ENCODE measurements at regions of chr3 and their contacts with region 1.

Region 1: GRCh38 chr3:155701882-155702465 is 42.9 kb downstream of the PLCH1 start:
- DNase-seq: no peak
- ATAC-seq: peak; percentile 62 to 66
- H3K4me3 ChIP-seq: no peak overlapping the region
- H3K27ac ChIP-seq: no peak overlapping the region
- H3K4me1 ChIP-seq: no peaks in the 10 kb centered on the region
- H3K27me3 ChIP-seq: no peaks in the 10 kb centered on the region
- CTCF ChIP-seq: peak; percentile 52 to 72 (median 66)
- POLR2A ChIP-seq: no peak

Region 2: DNA sequence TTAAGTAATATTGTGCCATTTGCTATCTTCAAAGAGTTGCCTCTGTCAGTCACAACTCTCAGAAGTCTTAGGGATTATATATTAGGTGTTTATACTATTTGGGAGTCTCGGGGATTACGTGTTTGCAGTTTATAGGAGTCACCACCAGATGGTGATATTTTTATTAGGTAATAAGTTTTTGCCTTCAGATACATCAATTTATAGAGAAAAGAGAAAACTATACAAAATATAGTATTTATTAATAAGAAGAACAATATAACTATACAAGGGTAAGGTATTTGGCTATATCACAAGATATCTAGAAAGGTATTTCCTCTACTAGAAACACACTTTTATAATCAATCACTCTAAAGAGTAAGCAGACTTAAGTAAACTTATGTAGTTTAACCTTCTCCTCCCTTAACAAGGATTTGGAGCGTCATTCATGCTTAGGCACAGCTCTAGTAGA is 1367.0 kb before region 1 on chr3:
- in situ Hi-C with region 1: loop called (anchors 5 to 25 kb)
- intact Hi-C with region 1: loop called (anchors 5 kb)
- DNase-seq: no peak
- ATAC-seq: peak in 1 of 2 donors; percentile 54
- H3K4me3 ChIP-seq: no peak overlapping the region
- H3K27ac ChIP-seq: no peak overlapping the region
- H3K4me1 ChIP-seq: no peaks in the 10 kb centered on the region
- H3K27me3 ChIP-seq: peaks cover 0 to 3% (median 0%) of the 10 kb centered on the region in 3 donors
- CTCF ChIP-seq: peak; percentile 34 to 68 (median 42)
- POLR2A ChIP-seq: no peak

Region 3: GRCh38 chr3:154758109-154758868 is 943.7 kb before region 1 on chr3:
- in situ Hi-C with region 1: loop called in 2 of 4 experiments (anchors 10 to 25 kb)
- intact Hi-C with region 1: loop called (anchors 5 kb)
- DNase-seq: no peak
- ATAC-seq: peak; percentile 62 to 68
- H3K4me3 ChIP-seq: no peak overlapping the region
- H3K27ac ChIP-seq: no peak overlapping the region
- H3K4me1 ChIP-seq: no peaks in the 10 kb centered on the region
- H3K27me3 ChIP-seq: no peaks in the 10 kb centered on the region
- CTCF ChIP-seq: peak; percentile 25 to 61 (median 53)
- POLR2A ChIP-seq: no peak

Region 4: GRCh38 chr3:155352900-155353490 is 349.0 kb before region 1 on chr3:
- in situ Hi-C with region 1: loop called (anchors 5 to 25 kb)
- intact Hi-C with region 1: loop called (anchors 1 kb)
- DNase-seq: no peak
- ATAC-seq: no peak
- H3K4me3 ChIP-seq: no peak overlapping the region
- H3K27ac ChIP-seq: no peak overlapping the region
- H3K4me1 ChIP-seq: no peaks in the 10 kb centered on the region
- H3K27me3 ChIP-seq: no peaks in the 10 kb centered on the region
- CTCF ChIP-seq: peak in 4 of 5 experiments; percentile 19 to 39 (median 29)
- POLR2A ChIP-seq: no peak

Region 5: DNA sequence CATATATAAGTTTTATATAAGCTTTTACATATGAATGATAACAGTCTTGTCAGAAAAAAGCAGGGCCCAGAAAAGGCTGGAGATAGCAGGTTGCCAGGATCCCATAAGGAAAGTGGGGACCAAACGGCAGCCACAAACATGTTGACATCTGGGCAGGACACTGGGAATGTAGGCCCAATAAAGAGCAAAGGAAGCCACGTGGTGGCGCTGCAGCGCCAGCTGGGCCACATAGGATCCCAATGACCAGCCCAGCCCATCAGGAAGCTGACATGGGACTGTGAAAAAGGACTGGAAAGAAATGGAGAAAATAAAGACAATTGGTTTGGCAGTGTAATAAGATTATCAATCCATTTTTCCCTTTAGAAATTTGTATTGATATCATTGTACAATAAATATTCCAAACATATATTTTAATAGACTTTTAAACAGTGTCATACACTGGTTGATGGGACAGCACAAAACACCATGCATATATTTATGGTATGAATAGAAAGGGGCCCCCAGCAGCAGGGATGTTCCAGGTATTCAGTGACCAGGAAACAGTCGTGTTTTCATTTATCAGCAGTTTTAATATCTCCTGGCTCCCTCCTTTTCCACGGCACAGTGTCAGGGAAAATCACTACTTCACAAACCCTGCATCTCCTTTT is 319.5 kb before region 1 on chr3:
- in situ Hi-C with region 1: no loop called
- intact Hi-C with region 1: loop called (anchors 10 kb)
- DNase-seq: peak in 1 of 2 donors; percentile 38
- ATAC-seq: no peak
- H3K4me3 ChIP-seq: no peak overlapping the region
- H3K27ac ChIP-seq: no peak overlapping the region
- H3K4me1 ChIP-seq: no peaks in the 10 kb centered on the region
- H3K27me3 ChIP-seq: no peaks in the 10 kb centered on the region
- CTCF ChIP-seq: peak in 3 of 5 experiments; percentile 18 to 33 (median 20)
- POLR2A ChIP-seq: no peak